AG04449 (cell line): ENCODE measurements at regions of chr5 and their contacts with region 1.

Region 1: DNA sequence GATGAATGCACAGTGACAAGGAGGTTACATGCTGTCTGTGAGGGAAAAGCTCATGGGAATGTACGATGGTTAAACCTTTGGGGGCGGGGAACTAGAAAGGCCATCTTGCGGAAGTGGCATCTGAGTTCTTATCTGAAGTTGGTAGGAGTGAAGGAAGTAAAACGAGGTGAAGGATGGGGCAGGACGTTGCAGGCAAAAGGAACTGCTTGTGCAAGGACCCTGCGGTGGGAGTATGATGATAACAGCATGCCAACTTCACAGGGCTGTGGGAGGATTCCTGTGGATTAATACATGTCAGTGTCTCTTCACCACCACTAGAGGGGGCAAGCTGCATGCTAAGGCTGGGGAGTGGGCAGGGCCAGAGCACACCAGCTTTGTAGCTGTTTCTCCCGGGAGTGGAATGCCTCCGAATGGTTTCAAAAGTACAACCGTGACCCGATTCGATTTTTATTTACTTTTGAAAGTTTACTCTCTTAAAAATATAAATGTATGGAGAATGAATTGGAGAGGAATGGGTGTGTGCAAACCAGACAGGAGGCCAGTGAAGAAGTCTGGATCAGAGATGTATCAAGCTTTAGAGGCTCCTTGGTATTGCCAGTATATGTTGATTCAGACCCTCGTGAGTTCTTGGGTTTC is 62.5 kb downstream of the CYFIP2 start:
- DNase-seq: peak; percentile 38
- H3K4me3 ChIP-seq: peak overlapping the region; percentile 35
- CTCF ChIP-seq: peak; percentile 93

Region 2: GRCh38 chr5:157148734-157149615 is 179.4 kb before region 1 on chr5:
- CTCF ChIA-PET with region 1: interaction called, 10 read pairs
- POLR2A ChIA-PET with region 1: interaction called, 3 read pairs
- DNase-seq: no peak
- H3K4me3 ChIP-seq: no peak overlapping the region
- CTCF ChIP-seq: peak; percentile 76

Region 3: DNA sequence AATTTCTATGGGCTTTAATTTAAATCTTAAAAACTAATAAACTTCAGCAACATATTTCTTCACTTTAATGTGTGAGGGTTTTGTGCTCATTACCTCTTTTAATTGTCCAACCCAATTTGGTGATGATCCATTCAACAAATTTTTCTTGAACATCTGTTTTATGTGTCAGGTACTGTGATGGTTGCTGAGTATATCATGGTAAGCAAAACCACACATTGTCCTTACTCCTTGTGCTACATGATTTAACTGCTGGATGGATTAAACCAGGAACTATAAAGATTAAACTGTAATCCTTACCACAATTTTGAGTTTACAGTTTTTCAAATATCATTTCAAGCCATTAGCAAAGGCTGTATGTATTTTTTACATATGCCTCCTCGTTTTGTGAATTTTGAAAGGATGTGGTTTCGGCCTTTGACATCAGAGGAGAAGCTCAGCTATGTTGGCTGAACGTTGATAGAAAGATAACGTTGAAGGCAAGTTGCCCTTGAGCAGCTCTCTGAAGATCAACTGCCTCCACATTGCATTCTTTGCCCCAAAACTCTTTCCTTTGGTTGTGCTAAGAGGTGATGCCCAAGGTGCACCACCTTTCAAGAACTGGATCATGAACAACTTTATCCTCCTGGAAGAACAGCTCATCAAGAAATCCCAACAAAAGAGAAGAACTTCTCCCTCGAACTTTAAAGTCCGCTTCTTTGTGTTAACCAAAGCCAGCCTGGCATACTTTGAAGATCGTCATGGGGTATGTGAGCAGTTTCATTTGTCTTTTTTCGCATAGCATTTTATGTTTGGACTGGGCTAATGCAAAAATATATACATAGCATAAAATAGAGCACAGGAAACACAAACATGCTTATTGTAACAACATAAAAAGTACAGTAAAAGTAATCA is 147.8 kb before region 1 on chr5 and contains the start of gene ITK:
- CTCF ChIA-PET with region 1: no interaction called
- POLR2A ChIA-PET with region 1: no interaction called
- DNase-seq: no peak
- H3K4me3 ChIP-seq: no peak within 1 kb of the TSS
- CTCF ChIP-seq: no peak

Region 4: DNA sequence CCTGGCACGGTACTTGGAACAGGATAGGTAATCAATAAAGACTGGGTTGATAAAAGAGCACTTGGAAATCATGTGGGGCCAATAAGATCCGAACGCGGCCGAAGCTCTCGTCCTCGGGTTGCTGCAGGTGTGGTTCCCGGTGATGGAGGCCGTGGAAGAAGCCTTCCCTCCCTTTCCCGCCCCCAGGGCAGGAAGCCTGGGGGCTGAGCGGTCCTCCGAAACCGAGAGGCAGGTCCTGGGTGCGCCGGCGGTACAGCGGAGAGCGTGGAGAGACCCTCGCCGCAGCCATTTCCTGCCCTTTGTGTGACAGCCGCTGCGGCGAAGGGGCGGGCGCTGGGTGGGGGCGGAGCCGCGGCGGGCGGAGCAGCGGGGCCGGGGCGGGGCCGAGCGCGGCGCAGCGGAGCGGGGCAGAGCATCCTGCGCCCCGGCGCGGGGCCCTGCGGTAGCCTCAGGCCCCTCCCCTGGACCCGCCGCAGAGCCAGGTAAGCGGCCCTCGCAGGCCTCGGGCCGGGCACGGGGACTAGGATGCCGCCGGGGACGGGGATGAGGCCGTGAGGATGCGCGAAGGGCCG is 62.6 kb before region 1 on chr5 and contains the start of gene CYFIP2:
- CTCF ChIA-PET with region 1: interaction called, 12 read pairs
- POLR2A ChIA-PET with region 1: no interaction called
- DNase-seq: no peak
- H3K4me3 ChIP-seq: peak within 1 kb of the TSS; percentile 67
- CTCF ChIP-seq: no peak

Region 5: DNA sequence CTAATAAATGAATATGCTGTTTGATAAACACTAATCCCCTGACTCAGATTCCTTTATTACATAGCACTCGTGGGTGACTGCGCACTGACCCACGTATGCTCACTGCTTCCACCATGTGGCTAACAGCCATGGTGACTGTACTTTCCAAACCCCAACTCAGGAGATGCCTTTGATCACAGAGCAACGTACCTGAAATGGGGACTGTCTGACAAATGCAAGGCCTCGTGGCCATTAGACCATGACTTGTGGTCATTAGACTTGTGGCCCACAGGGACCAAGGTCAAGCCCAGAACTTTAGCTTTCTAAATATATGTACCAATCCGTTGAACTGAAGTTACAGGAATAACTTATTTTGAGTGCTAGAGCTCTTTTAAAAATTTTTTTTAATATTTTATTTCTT is 15.9 kb before region 1 on chr5:
- CTCF ChIA-PET with region 1: interaction called, 98 read pairs
- POLR2A ChIA-PET with region 1: no interaction called
- DNase-seq: no peak
- H3K4me3 ChIP-seq: no peak overlapping the region
- CTCF ChIP-seq: peak; percentile 81

Region 6: DNA sequence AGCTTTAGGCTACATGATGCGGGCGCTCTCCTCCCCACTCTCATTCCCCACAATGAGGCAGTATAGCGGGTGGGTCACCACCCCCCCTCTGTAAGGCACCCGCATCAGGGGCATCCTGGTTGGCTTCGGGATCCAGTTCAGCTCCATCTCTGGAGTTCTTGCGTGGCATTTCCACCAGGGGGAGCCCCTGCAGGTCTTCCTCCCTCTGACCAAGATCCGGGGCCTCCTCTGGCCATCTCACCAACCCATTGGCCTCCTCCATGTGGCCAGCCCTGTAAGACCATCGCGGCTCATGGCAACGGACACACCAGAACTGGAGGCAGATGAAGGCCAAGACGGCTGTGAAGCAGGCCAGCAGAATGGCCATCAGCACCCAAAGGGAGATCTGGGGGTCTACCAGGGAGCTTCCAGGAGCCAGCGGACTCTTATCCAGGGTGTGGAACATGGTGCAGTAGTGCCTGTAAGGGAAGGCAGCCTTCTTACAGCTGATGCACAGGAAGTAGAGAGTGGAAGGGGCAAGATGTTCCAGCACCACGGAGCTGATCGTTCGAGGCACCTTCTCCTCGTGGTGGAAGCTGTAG is 14.5 kb after region 1 on chr5:
- CTCF ChIA-PET with region 1: interaction called, 140 read pairs
- POLR2A ChIA-PET with region 1: no interaction called
- DNase-seq: no peak
- H3K4me3 ChIP-seq: no peak overlapping the region
- CTCF ChIP-seq: peak; percentile 58

Region 7: GRCh38 chr5:157354800-157355199 is 26.4 kb after region 1 on chr5:
- CTCF ChIA-PET with region 1: interaction called, 51 read pairs
- POLR2A ChIA-PET with region 1: no interaction called
- DNase-seq: no peak
- H3K4me3 ChIP-seq: no peak overlapping the region
- CTCF ChIP-seq: peak; percentile 34

Region 8: GRCh38 chr5:157486221-157486681 is 157.9 kb after region 1 on chr5:
- CTCF ChIA-PET with region 1: interaction called, 272 read pairs
- POLR2A ChIA-PET with region 1: no interaction called
- DNase-seq: no peak
- H3K4me3 ChIP-seq: no peak overlapping the region
- CTCF ChIP-seq: no peak